Activated T-helper 1 cell treated with anti-CD3 and anti-CD28 coated beads, Interleukin-12 subunit alpha, Interleukin-12 subunit beta, Interleukin-2, Interleukin-4 antibody, amounts not matched to agents 30 ng/mL and 10 ng/mL and 1 ng/mL, durations not matched to agents 14 hours and 24 hours and 36 hours (primary cell): ENCODE measurements at regions of chr2 and their contacts with region 1.

Region 1: DNA sequence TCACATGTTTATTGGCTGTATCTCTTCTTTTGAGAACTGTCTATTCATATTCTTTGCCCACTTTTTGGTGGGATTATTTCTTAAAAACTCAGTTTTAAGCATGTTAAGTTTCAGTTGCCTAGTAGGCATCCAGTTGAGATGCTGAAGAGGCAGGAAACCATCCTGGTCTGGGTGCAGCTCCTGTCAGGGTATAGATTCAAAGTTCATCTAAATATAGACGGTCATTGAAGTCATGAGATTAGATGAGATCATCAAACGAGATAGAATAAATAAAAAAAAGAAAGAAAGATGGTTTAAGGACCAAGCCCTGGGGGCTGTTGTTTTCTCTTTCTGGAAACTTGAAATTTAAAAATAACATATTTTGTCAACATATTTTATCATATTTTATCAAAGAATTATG is 9.2 kb upstream of the DNAH7 start:
- DNase-seq: no peak
- H3K4me3 Mint-ChIP-seq: no peak overlapping the region
- H3K27ac Mint-ChIP-seq: no peak overlapping the region
- H3K4me1 Mint-ChIP-seq: peaks cover 19% of the 10 kb centered on the region
- H3K27me3 Mint-ChIP-seq: no peaks in the 10 kb centered on the region

Region 2: GRCh38 chr2:196131384-196131937 is 53.6 kb after region 1 on chr2:
- intact Hi-C with region 1: loop called (anchors 2 kb)
- DNase-seq: peak; percentile 41
- H3K4me3 Mint-ChIP-seq: no peak overlapping the region
- H3K27ac Mint-ChIP-seq: peak overlapping the region; percentile 78
- H3K4me1 Mint-ChIP-seq: peaks cover 31% of the 10 kb centered on the region
- H3K27me3 Mint-ChIP-seq: peaks cover 3% of the 10 kb centered on the region

Region 3: DNA sequence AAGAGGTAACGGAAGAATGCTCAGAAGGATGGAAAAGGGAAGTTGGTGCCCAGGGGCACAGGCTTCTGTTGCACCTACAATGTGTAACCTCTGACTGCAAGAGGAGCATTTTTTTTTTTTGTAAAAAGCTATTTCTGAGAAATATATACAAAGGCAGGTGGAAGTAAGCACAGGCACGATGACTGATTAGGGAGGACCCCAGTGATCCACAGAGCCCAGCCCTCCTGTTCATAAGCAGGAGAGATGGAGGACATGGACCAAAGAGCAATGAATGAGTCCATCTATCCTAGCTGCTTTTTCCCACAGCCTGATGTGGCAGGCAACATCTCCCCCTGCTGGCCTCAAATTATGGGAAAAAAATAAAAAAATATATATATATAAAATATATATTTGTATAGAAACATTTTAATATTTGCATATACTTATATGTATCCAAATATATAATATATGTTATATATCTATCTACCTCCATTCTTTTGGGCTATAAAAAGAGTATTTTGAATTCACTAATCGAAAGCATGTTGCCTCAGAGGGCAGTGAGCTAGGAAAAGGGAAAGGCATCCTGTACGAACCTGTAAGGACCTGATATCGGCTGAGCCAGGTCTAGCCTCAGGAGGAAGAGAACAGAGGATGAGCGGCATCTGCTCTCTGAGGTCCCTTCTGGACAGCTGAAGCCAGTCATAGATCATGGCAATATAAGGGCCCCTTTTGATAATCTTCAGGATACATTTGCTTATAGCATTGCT is 259.6 kb after region 1 on chr2:
- intact Hi-C with region 1: loop called (anchors 1 kb)
- DNase-seq: no peak
- H3K4me3 Mint-ChIP-seq: no peak overlapping the region
- H3K27ac Mint-ChIP-seq: no peak overlapping the region
- H3K4me1 Mint-ChIP-seq: no peaks in the 10 kb centered on the region
- H3K27me3 Mint-ChIP-seq: peaks cover 10% of the 10 kb centered on the region

Region 4: DNA sequence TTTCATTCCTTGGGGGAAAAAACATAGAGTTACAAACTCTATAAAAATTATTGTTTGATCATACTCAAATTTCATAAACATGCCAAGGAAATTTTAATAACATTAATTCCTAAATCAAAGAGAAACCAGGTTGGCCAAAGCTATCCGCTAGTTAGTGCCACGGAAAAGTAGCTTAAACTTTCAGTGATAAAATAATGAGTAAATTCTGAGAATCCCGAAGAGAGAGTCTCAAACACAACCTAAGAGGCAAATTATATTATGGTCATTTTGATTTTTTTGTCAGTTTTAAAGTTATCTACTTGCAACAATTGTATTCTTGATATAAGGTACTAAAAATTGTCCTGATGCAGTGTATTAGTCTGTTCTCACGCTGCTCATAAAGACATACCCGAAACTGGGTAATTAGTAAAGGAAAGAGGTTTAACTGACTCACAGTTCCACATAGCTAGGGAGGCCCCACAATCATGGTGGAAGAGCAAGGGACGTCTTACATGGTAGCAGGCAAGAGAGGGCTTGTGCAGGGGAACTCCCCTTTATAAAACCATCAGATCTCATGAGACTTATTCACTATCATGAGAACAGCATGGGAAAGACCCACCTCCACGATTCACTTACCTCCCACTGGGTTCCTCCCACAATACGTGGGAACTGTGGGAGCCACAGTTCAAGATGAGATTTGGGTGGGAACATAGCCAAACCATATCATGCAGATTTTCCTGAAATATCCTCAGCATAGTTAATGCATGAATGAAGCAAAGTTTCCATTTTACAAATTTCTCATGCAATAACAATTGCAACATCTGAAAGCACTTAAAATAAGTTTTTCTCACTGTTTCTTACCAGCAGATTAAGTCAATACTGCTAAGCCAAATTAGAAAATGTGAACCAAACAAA is 299.4 kb after region 1 on chr2:
- intact Hi-C with region 1: no loop called
- DNase-seq: no peak
- H3K4me3 Mint-ChIP-seq: no peak overlapping the region
- H3K27ac Mint-ChIP-seq: no peak overlapping the region
- H3K4me1 Mint-ChIP-seq: no peaks in the 10 kb centered on the region
- H3K27me3 Mint-ChIP-seq: peaks cover 5% of the 10 kb centered on the region

Region 5: DNA sequence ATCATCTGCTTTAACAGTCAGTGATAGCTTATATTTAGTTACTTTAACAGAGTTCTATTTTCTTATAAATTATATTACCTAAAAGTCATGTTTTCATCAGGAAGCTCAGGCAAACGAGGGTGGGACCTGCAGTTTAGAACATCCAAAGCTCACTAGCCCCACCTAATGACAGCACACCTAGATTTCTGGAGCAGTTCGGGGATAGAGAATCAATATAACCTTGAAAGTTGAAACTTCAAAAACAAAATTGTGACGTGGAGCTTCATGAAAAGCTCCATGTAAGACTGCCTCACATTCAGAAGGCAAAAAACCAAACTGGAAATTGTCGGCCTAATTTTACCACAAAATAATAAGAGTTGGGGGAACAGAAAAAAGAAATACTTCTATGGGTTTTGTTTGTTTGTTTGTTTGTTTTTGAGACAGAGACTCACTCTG is 375.8 kb after region 1 on chr2:
- intact Hi-C with region 1: loop called (anchors 1 kb)
- DNase-seq: no peak
- H3K4me3 Mint-ChIP-seq: no peak overlapping the region
- H3K27ac Mint-ChIP-seq: no peak overlapping the region
- H3K4me1 Mint-ChIP-seq: peaks cover 5% of the 10 kb centered on the region
- H3K27me3 Mint-ChIP-seq: peaks cover 31% of the 10 kb centered on the region